ENCODE measurements at regions of chr14 and their contacts with region 1.

Region 1: GRCh38 chr14:97620066-97620465 is 822.9 kb downstream of the VRK1 start:
- DNase-seq: no peak
- H3K4me3 Mint-ChIP-seq: peak overlapping the region; percentile 65
- H3K27ac Mint-ChIP-seq: peak overlapping the region; percentile 80
- H3K4me1 Mint-ChIP-seq: peaks cover 45% of the 10 kb centered on the region
- H3K27me3 Mint-ChIP-seq: no peaks in the 10 kb centered on the region

Region 2: GRCh38 chr14:97224016-97224415 is 396.1 kb before region 1 on chr14:
- CTCF ChIA-PET with region 1: no interaction called
- POLR2A ChIA-PET with region 1: no interaction called
- intact Hi-C with region 1: no loop called
- DNase-seq: no peak
- H3K4me3 Mint-ChIP-seq: no peak overlapping the region
- H3K27ac Mint-ChIP-seq: no peak overlapping the region
- H3K4me1 Mint-ChIP-seq: peaks cover 9% of the 10 kb centered on the region
- H3K27me3 Mint-ChIP-seq: peaks cover 20% of the 10 kb centered on the region

Region 3: GRCh38 chr14:97571866-97572555 is 48.1 kb before region 1 on chr14:
- CTCF ChIA-PET with region 1: no interaction called
- POLR2A ChIA-PET with region 1: no interaction called
- intact Hi-C with region 1: no loop called
- DNase-seq: no peak
- H3K4me3 Mint-ChIP-seq: no peak overlapping the region
- H3K27ac Mint-ChIP-seq: no peak overlapping the region
- H3K4me1 Mint-ChIP-seq: peaks cover 4% of the 10 kb centered on the region
- H3K27me3 Mint-ChIP-seq: no peaks in the 10 kb centered on the region

Region 4: DNA sequence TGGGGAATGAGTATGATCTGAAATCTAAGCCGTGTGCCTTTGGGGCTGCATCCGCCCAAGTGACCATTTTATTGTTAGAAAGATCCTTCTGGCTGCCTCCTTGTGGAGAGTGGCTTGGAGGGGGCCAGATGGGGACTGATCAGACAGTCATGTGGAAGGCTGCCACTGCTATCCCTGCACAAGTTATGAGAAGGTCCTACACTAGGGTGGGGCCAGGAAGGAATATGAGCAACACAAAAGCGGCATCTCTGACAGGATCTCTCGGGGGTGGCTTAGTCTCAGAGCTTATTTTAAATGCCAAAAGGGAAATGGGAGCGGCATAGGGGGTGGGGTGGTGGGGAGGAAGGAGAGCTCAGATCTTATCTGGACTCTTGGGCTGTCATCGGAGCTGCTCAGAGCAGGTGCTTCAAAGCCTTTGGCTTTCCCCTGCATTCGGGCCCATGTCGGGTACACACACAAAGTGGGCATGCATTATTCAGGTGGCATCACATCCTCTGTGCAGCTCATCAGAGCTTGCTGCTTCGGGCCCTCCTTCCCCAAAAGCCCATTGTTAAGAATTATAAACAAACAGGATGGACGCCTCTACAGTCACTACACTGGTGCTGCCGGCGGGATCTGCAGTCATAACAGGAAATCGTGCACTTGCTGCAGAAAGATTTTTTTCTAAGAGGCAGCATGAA is 17.5 kb before region 1 on chr14:
- CTCF ChIA-PET with region 1: interaction called, 3 read pairs
- POLR2A ChIA-PET with region 1: no interaction called
- intact Hi-C with region 1: loop called (anchors 1 kb)
- DNase-seq: peak; percentile 80
- H3K4me3 Mint-ChIP-seq: no peak overlapping the region
- H3K27ac Mint-ChIP-seq: no peak overlapping the region
- H3K4me1 Mint-ChIP-seq: peaks cover 29% of the 10 kb centered on the region
- H3K27me3 Mint-ChIP-seq: no peaks in the 10 kb centered on the region

Region 5: DNA sequence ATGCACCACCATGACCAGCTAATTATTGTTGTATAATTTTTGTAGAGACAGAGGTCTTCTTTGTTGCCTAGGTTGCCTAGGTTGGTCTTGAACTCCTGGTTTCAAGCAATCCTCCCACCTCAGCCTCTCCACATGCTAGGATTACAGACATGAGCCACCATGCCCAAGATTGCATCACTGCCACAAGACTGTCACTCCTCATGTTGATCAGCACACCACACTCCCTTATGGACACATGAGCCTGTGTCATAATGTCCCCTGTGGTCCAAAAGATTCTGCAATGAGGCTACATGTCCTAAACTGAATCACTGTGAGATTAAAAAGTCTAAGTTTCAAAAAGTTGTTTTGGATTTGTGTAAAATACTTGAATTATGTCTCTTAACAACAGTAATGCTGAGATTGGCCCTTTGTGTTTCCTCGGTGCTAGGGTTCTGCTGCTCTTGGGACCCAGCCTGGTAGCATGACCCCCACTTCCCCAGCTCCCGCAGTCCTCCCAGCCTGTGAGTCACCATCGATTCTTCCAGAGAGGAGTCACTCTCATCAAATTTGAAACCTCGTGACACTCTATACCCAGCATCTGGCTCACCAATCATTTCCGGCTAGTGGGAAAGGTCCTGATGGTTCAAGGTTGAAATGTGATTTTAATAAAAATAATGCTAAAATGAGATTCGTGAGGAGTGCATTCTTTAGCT is 68.0 kb after region 1 on chr14:
- CTCF ChIA-PET with region 1: no interaction called
- POLR2A ChIA-PET with region 1: no interaction called
- intact Hi-C with region 1: no loop called
- DNase-seq: no peak
- H3K4me3 Mint-ChIP-seq: no peak overlapping the region
- H3K27ac Mint-ChIP-seq: no peak overlapping the region
- H3K4me1 Mint-ChIP-seq: peaks cover 18% of the 10 kb centered on the region
- H3K27me3 Mint-ChIP-seq: no peaks in the 10 kb centered on the region

Measured in activated CD4-positive, alpha-beta memory T cell treated with anti-CD3 and anti-CD28 coated beads for 36 hours (primary cell).